ENCODE measurements at regions of chr3 and their contacts with region 1.

Region 1: GRCh38 chr3:185942907-185943759 is 5.3 kb upstream of the TRA2B start:
- DNase-seq: peak; percentile 66
- H3K4me3 ChIP-seq: no peak overlapping the region
- H3K27ac ChIP-seq: no peak overlapping the region
- H3K4me1 ChIP-seq: no peaks in the 10 kb centered on the region
- H3K27me3 ChIP-seq: peaks cover 6 to 13% of the 10 kb centered on the region in 2 experiments
- CTCF ChIP-seq: peak; percentile 97 to 99
- POLR2A ChIP-seq: no peak

Region 2: DNA sequence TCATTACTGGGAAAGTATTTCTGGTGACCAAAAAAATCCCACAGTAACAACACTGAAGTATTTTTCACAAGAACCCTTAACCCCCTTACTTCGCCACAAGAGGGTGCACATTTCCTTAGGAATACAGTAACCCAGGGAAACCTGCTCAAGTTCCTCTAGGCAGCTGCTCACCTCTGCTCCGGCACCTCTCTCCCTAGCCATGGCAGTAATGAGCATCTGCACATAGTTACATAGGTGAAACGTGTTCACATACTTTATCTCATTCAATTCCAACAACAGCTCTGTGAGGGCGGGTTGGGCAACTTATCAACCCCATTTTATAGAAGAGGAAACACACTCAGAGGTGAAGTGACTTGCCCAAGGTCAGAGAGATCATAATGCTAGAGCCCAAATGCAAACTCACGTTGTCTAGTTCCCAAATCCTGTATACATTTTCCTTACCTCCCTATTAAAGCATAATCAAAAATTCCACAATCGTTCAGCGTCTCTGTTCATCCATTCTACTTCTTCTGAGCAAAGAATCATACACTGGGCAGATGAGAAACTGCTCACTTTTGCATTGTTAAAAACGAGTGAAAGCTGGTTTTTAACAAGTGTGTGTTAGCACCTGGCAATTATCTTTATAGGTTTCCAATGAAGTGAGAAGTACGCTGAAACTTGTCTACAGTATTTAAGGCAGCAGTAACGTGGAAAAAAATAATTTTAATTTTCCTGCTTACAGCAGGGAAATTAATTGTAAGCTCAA is 209.0 kb before region 1 on chr3:
- CTCF ChIA-PET with region 1: interaction called, 13 read pairs
- POLR2A ChIA-PET with region 1: no interaction called
- dilution Hi-C with region 1: no loop called
- intact Hi-C with region 1: loop called (anchors 1 kb)
- DNase-seq: peak; percentile 87
- H3K4me3 ChIP-seq: no peak overlapping the region
- H3K27ac ChIP-seq: peak overlapping the region; percentile 100
- H3K4me1 ChIP-seq: peaks cover 93% of the 10 kb centered on the region
- H3K27me3 ChIP-seq: no peaks in the 10 kb centered on the region
- CTCF ChIP-seq: peak; percentile 56 to 62
- POLR2A ChIP-seq: no peak

Region 3: GRCh38 chr3:185959609-185960517 is 16.7 kb after region 1 on chr3:
- CTCF ChIA-PET with region 1: interaction called, 144 read pairs
- POLR2A ChIA-PET with region 1: interaction called, 6 read pairs
- dilution Hi-C with region 1: no loop called
- intact Hi-C with region 1: no loop called
- DNase-seq: peak; percentile 7
- H3K4me3 ChIP-seq: peak overlapping the region in 1 of 3 experiments; percentile 43
- H3K27ac ChIP-seq: peak overlapping the region; percentile 44
- H3K4me1 ChIP-seq: no peaks in the 10 kb centered on the region
- H3K27me3 ChIP-seq: peaks cover 2% of the 10 kb centered on the region in 2 experiments
- CTCF ChIP-seq: no peak
- POLR2A ChIP-seq: peak; percentile 62

Region 4: GRCh38 chr3:185983495-185984141 is 40.5 kb after region 1 on chr3:
- CTCF ChIA-PET with region 1: interaction called, 45 read pairs
- POLR2A ChIA-PET with region 1: no interaction called
- dilution Hi-C with region 1: no loop called
- intact Hi-C with region 1: no loop called
- DNase-seq: peak; percentile 55
- H3K4me3 ChIP-seq: no peak overlapping the region
- H3K27ac ChIP-seq: no peak overlapping the region
- H3K4me1 ChIP-seq: peaks cover 6% of the 10 kb centered on the region
- H3K27me3 ChIP-seq: no peaks in the 10 kb centered on the region
- CTCF ChIP-seq: peak; percentile 77 to 88
- POLR2A ChIP-seq: no peak

Region 5: GRCh38 chr3:186090901-186091300 is 147.8 kb after region 1 on chr3:
- CTCF ChIA-PET with region 1: no interaction called
- POLR2A ChIA-PET with region 1: no interaction called
- dilution Hi-C with region 1: no loop called
- intact Hi-C with region 1: no loop called
- DNase-seq: no peak
- H3K4me3 ChIP-seq: no peak overlapping the region
- H3K27ac ChIP-seq: no peak overlapping the region
- H3K4me1 ChIP-seq: no peaks in the 10 kb centered on the region
- H3K27me3 ChIP-seq: no peaks in the 10 kb centered on the region
- CTCF ChIP-seq: no peak
- POLR2A ChIP-seq: no peak

Region 6: GRCh38 chr3:186540221-186540834 is 597.2 kb after region 1 on chr3:
- CTCF ChIA-PET with region 1: interaction called, 36 read pairs
- POLR2A ChIA-PET with region 1: no interaction called
- dilution Hi-C with region 1: no loop called
- intact Hi-C with region 1: no loop called
- DNase-seq: peak; percentile 82
- H3K4me3 ChIP-seq: no peak overlapping the region
- H3K27ac ChIP-seq: peak overlapping the region; percentile 46
- H3K4me1 ChIP-seq: peaks cover 20% of the 10 kb centered on the region
- H3K27me3 ChIP-seq: no peaks in the 10 kb centered on the region
- CTCF ChIP-seq: peak; percentile 43 to 66
- POLR2A ChIP-seq: no peak

Measured in endothelial cell of umbilical vein (primary cell).